ENCODE measurements at regions of chr9 and their contacts with region 1.

Region 1: DNA sequence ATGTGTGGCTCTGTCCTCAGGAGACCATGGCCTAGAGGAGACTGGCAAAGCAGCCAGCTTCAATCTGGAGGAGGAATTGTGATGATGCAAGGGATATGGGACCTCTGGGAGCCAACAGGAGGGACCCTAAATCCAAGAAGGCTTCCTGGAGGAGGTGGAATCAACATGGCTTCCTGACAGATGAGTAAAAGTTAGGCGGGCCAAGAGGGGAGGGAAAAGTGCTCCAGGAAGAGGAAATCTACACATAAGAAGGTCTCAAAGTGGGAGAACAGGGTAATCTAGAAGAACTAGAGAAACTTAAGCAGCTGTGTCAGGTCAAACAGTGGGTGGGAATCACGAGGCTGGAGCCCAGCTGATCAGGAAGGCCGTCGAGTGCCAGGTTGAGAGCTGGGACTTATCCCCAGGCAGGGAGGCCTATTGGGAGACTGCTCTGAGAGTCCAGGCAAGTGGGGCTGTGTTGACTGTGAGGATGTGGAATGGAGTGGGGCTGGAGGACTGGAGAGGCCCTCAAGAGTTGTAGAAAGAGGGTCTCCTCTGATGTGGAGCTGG is 119.1 kb downstream of the C9orf50 start:
- DNase-seq: no peak
- H3K4me3 ChIP-seq: no peak overlapping the region
- H3K27ac ChIP-seq: peak overlapping the region in 2 of 4 donors; percentile 92 to 97
- H3K4me1 ChIP-seq: peaks cover 8 to 33% (median 24%) of the 10 kb centered on the region in 4 donors
- H3K27me3 ChIP-seq: no peaks in the 10 kb centered on the region
- CTCF ChIP-seq: no peak
- EP300 ChIP-seq: no peak
- POLR2A ChIP-seq: no peak

Region 2: GRCh38 chr9:129548291-129549135 is 46.7 kb after region 1 on chr9:
- in situ Hi-C with region 1: no loop called
- intact Hi-C with region 1: loop called (anchors 1 kb)
- DNase-seq: no peak
- H3K4me3 ChIP-seq: no peak overlapping the region
- H3K27ac ChIP-seq: peak overlapping the region; percentile 3 to 86 (median 80)
- H3K4me1 ChIP-seq: peaks cover 0 to 18% (median 12%) of the 10 kb centered on the region in 4 donors
- H3K27me3 ChIP-seq: peaks cover 42% of the 10 kb centered on the region
- CTCF ChIP-seq: no peak
- EP300 ChIP-seq: no peak
- POLR2A ChIP-seq: no peak

Measured in transverse colon (tissue), 4 donors.